Posterior cingulate gyrus (tissue), 11 donors: ENCODE measurements at regions of chr4 and their contacts with region 1.

Region 1: GRCh38 chr4:147866532-147867271 is 134.8 kb downstream of the ARHGAP10 start:
- DNase-seq: peak; percentile 82 to 98 (median 94)

Region 2: GRCh38 chr4:147019061-147019460 is 847.6 kb before region 1 on chr4:
- intact Hi-C with region 1: loop called (anchors 5 kb)
- DNase-seq: peak in 8 of 10 donors; percentile 17 to 92 (median 70)

Region 3: GRCh38 chr4:147111033-147111367 is 755.7 kb before region 1 on chr4:
- intact Hi-C with region 1: loop called (anchors 10 kb)
- DNase-seq: no peak

Region 4: GRCh38 chr4:147518846-147519767 is 347.6 kb before region 1 on chr4:
- intact Hi-C with region 1: loop called (anchors 5 kb)
- DNase-seq: peak in 7 of 10 donors; percentile 16 to 83 (median 44)

Region 5: DNA sequence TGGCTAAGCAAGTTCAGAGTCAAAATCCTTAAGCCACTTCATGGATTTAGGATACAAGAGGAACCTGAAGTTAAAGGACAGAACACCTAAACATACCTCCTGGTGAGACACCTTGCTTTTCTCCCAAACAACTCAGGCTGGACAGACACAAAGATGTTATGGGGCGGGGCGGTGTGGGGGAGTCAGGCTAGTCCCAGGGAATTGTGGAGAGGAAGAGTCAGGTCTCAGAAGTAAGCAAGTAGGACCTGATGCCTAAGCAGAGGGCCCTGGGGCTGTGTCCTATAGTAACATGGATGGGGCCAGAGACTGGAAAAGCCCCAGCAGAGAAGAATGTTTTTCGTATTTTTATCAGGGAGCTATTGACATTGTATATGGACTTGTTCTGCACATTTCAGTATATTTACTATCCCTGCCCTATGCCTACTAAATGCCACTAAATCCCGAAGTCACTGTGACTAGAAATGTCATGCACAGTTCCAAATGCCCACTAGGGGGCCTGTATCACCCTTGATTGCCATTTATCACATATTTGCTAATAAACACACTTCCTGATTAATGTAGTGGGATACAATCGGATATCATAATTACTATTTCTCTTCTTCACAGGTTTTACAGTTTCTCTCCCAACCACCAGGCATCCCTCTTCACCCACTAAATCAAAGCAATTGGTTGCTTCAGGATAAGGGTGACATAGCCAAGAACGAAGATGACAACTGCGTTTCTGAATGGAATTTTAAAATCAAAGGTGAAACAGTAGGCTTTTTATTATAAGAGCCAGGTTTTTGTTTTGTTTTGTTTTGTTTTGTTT is 158.6 kb before region 1 on chr4:
- intact Hi-C with region 1: loop called (anchors 1 kb)
- DNase-seq: peak in 4 of 10 donors; percentile 28 to 47 (median 29)

Region 6: DNA sequence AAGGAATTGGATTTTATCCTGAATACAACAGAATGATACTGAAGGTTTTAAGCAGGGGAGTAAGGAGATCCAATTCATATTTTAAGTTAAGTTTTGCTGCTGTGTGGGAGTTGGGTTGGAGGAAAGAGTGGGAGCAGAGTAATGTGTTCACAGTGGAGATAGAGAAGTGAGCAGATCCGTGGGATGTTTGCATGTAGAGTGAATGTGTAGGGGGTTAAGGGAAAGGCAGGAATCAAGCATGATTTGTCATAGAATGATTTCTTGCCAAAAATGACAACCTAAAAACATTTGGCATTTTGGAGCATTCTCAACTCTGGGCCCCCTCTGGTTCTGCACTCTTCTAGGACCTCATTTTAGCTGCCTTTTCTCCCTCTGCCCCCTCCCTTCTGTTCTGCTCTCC is 58.3 kb before region 1 on chr4:
- intact Hi-C with region 1: no loop called
- DNase-seq: no peak

Region 7: DNA sequence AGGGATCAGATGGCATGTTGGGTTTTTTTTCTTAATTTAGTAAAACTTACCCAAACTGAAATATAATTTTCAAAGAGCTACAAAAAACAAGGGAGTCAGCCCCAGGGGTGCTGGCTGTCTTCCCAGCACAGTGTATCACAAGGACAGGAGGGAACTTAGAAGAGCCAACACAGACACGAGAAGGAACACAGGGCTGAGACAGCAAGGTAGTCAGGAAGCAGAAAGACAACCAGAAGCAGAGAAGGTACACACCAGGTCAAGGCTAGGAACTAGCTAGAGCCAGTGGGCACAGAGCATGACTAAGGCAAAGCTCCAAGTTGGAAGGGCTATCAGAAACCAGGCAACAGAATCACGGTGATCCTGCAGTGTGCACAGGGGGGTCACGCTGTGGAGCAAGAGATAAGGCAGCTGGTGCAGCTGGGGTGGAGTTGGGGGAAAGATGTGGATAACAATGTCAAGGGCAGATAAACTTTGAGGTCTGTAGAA is 406.8 kb after region 1 on chr4:
- intact Hi-C with region 1: no loop called
- DNase-seq: no peak